Heart left ventricle (tissue), 16 donors: ENCODE measurements at regions of chr15 and their contacts with region 1.

Region 1: GRCh38 chr15:41972253-41973242 is at the start of gene EHD4:
- DNase-seq: peak; percentile 99 to 100 (median 99)
- ATAC-seq: peak; percentile 94 to 97 (median 95)
- H3K4me3 ChIP-seq: peak within 1 kb of the TSS; percentile 68 to 99 (median 89)
- H3K27ac ChIP-seq: peak within 1 kb of the TSS; percentile 77 to 97 (median 94)
- H3K4me1 ChIP-seq: peaks cover 12 to 44% (median 36%) of the 10 kb centered on the region in 12 donors
- H3K27me3 ChIP-seq: no peaks in the 10 kb centered on the region
- CTCF ChIP-seq: peak in 9 of 12 donors; percentile 18 to 67 (median 47)
- POLR2A ChIP-seq: peak in 1 of 2 donors; percentile 92
- total RNA-seq, gene EHD4: 28.2 to 70.8 (median 43.9) TPM

Region 2: DNA sequence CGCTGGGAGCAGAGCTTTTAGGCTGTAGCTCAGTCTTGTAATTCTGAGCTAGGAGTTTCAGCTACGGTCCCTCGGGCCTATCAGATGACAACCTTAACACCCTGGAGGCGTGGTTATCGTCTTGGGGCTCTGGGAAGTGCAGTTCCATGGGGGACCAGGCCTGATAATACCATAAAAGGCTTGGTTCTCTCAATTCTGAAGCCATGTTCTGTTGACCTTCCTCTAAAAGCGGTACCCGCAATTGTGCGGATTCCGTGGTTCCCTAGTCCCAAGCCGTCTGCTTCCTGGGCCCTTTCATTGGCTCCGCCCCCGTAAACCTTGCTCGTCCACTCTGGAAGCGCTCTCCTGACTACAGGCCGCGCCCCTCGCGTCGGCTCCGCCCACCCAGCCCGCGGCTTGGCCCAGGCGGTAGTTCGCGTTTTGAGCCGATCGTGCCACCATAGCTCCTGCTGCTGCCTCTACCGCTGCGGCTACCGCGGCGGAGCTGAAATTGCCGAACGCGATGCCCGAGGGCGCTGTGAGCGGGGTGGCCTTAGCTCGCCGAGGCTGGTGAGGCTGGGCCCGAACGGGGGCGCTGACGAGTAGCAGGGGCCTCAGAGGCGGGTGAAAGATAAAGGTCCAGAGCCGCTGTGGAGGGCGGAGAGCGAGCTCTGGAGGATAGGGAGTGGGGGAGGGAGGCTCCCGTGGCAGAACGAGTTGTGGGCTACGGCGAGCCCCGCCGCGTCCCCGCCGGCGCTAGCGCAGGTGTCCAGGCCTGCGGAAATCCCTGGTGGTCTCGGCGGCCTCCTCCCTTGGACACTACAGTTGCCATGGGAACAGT is 198.3 kb before region 1 on chr15 and contains the start of gene MAPKBP1:
- intact Hi-C with region 1: loop called in 3 of 10 experiments (anchors 5 kb)
- DNase-seq: peak; percentile 97 to 98 (median 98)
- ATAC-seq: peak; percentile 97 to 98 (median 98)
- H3K4me3 ChIP-seq: peak within 1 kb of the TSS; percentile 70 to 87 (median 78)
- H3K27ac ChIP-seq: peak within 1 kb of the TSS; percentile 39 to 92 (median 86)
- H3K4me1 ChIP-seq: peaks cover 3 to 49% (median 31%) of the 10 kb centered on the region in 12 donors
- H3K27me3 ChIP-seq: no peaks in the 10 kb centered on the region
- CTCF ChIP-seq: peak; percentile 25 to 94 (median 64)
- POLR2A ChIP-seq: peak in 1 of 2 donors; percentile 58
- total RNA-seq, gene MAPKBP1: 12.0 to 20.5 (median 14.8) TPM

Region 3: DNA sequence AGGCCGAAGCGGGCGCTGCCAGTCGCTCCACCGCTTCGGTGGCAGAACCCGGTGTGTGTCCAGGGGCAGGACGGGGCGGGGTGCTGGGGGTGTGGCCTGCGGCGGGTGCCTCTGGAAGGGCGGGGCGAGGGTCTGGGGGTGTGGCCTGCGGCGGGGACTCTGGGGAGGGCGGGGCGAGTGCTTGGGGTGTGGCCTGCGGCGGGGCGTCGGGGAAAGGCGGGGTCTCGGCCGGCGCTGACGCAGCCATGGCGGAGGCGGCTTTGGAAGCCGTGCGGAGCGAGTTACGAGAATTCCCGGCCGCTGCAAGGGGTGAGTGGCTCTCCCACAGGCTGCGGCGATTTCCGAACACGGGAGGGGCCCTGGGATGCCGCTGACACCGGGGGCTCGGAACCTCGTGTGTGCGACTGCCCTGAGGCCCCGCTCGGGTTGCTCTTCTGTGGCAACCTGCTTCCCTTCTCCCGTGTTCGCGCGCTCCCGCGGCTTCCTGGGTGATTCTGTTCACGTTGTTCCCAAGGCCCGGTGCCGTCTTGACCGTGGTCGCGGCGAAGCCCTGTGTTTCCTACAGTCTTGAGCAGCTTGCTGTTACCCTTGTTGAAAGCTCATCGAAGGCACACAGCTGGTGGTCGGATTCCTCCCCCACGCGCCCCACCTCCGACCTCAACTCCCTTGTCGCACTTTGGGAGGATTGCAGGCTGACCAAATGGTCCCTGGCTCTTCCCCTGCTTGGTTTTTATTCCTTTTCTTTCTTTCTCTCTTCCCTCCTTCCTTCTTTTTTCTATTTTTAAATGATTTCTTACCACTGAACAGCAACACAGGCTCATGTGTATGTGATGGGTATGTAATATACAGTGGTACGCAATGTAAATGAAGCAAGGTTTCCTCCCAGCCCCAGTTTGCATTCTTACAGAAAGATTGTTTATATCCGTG is 144.4 kb before region 1 on chr15 and contains the start of gene JMJD7:
- intact Hi-C with region 1: loop called in 3 of 10 experiments (anchors 5 to 10 kb)
- DNase-seq: peak; percentile 96 to 98 (median 96)
- ATAC-seq: peak; percentile 94 to 97 (median 96)
- H3K4me3 ChIP-seq: peak within 1 kb of the TSS; percentile 52 to 88 (median 76)
- H3K27ac ChIP-seq: peak within 1 kb of the TSS; percentile 22 to 89 (median 84)
- H3K4me1 ChIP-seq: peaks cover 0 to 26% (median 16%) of the 10 kb centered on the region in 12 donors
- H3K27me3 ChIP-seq: no peaks in the 10 kb centered on the region
- CTCF ChIP-seq: no peak
- POLR2A ChIP-seq: peak in 1 of 2 donors; percentile 85
- total RNA-seq, gene JMJD7: 5.4 to 17.9 (median 11.8) TPM

Region 4: DNA sequence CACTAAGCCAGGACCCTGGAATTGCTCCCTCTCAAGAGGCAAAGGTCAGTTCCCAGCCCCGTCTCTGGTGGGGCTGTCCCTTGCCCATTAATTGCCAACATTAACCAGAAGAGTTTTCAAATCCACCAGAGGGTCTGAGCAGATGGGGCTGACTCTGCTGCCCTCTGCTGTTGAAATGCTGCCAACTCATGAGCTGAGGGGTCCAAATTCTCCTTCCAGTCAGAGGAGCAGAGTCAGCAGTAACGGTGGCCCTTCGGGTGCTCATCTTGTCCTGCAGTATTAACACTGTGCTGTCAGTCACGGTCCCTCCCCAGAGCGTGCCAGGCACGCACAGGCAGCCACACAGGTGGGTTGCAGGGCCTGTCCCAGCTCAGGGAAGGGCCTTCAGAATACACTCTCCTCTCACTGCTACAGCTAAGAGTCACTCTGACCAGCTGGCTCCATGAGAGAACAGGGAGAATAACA is 68.0 kb before region 1 on chr15:
- intact Hi-C with region 1: loop called in 3 of 10 experiments (anchors 5 kb)
- DNase-seq: peak in 4 of 5 donors; percentile 63 to 67 (median 65)
- ATAC-seq: peak; percentile 48 to 75 (median 64)
- H3K4me3 ChIP-seq: no peak overlapping the region
- H3K27ac ChIP-seq: peak overlapping the region in 9 of 12 donors; percentile 20 to 67 (median 42)
- H3K4me1 ChIP-seq: peaks cover 0 to 40% (median 21%) of the 10 kb centered on the region in 12 donors
- H3K27me3 ChIP-seq: no peaks in the 10 kb centered on the region
- CTCF ChIP-seq: peak; percentile 78 to 89 (median 83)
- POLR2A ChIP-seq: no peak

Region 5: GRCh38 chr15:41917767-41918430 is 54.6 kb before region 1 on chr15:
- intact Hi-C with region 1: loop called in 6 of 10 experiments (anchors 5 to 10 kb)
- DNase-seq: peak in 2 of 5 donors; percentile 68 to 70
- ATAC-seq: peak; percentile 23 to 64 (median 45)
- H3K4me3 ChIP-seq: no peak overlapping the region
- H3K27ac ChIP-seq: peak overlapping the region; percentile 42 to 93 (median 83)
- H3K4me1 ChIP-seq: peaks cover 27 to 100% (median 94%) of the 10 kb centered on the region in 12 donors
- H3K27me3 ChIP-seq: no peaks in the 10 kb centered on the region
- CTCF ChIP-seq: no peak
- POLR2A ChIP-seq: no peak

Region 6: GRCh38 chr15:41930221-41930866 is 42.2 kb before region 1 on chr15:
- intact Hi-C with region 1: loop called in 8 of 10 experiments (anchors 5 kb)
- DNase-seq: peak in 2 of 5 donors; percentile 80 to 84
- ATAC-seq: peak; percentile 20 to 76 (median 55)
- H3K4me3 ChIP-seq: no peak overlapping the region
- H3K27ac ChIP-seq: peak overlapping the region in 11 of 12 donors; percentile 65 to 87 (median 78)
- H3K4me1 ChIP-seq: peaks cover 49 to 100% (median 94%) of the 10 kb centered on the region in 12 donors
- H3K27me3 ChIP-seq: no peaks in the 10 kb centered on the region
- CTCF ChIP-seq: peak in 9 of 12 donors; percentile 12 to 52 (median 25)
- POLR2A ChIP-seq: no peak

Region 7: GRCh38 chr15:41949401-41950126 is 23.0 kb before region 1 on chr15:
- intact Hi-C with region 1: loop called in 1 of 10 experiments (anchors 1 kb)
- DNase-seq: no peak
- ATAC-seq: no peak
- H3K4me3 ChIP-seq: no peak overlapping the region
- H3K27ac ChIP-seq: peak overlapping the region in 11 of 12 donors; percentile 8 to 85 (median 76)
- H3K4me1 ChIP-seq: peaks cover 15 to 88% (median 76%) of the 10 kb centered on the region in 12 donors
- H3K27me3 ChIP-seq: no peaks in the 10 kb centered on the region
- CTCF ChIP-seq: no peak
- POLR2A ChIP-seq: no peak

Region 8: GRCh38 chr15:42094512-42094963 is 122.0 kb after region 1 on chr15 and contains the start of gene PLA2G4D:
- intact Hi-C with region 1: no loop called
- DNase-seq: no peak
- ATAC-seq: no peak
- H3K4me3 ChIP-seq: no peak within 1 kb of the TSS
- H3K27ac ChIP-seq: no peak within 1 kb of the TSS
- H3K4me1 ChIP-seq: peaks cover 0 to 9% (median 0%) of the 10 kb centered on the region in 12 donors
- H3K27me3 ChIP-seq: no peaks in the 10 kb centered on the region
- CTCF ChIP-seq: no peak
- POLR2A ChIP-seq: no peak
- total RNA-seq, gene PLA2G4D: not detected

Region 9: GRCh38 chr15:42107473-42107872 is 134.9 kb after region 1 on chr15:
- intact Hi-C with region 1: no loop called
- DNase-seq: no peak
- ATAC-seq: no peak
- H3K4me3 ChIP-seq: no peak overlapping the region
- H3K27ac ChIP-seq: no peak overlapping the region
- H3K4me1 ChIP-seq: peaks cover 0 to 17% (median 0%) of the 10 kb centered on the region in 12 donors
- H3K27me3 ChIP-seq: peaks cover 0 to 4% (median 0%) of the 10 kb centered on the region in 9 donors
- CTCF ChIP-seq: no peak
- POLR2A ChIP-seq: no peak